ENCODE measurements at regions of chr1 and their contacts with region 1.

Region 1: GRCh38 chr1:38371505-38371844 is 324.9 kb upstream of the POU3F1 start:
- DNase-seq: no peak
- ATAC-seq: no peak
- H3K4me3 ChIP-seq: no peak overlapping the region
- H3K4me3 Mint-ChIP-seq: no peak overlapping the region
- H3K27ac ChIP-seq: no peak overlapping the region
- H3K27ac Mint-ChIP-seq: no peak overlapping the region
- H3K4me1 ChIP-seq: no peaks in the 10 kb centered on the region
- H3K4me1 Mint-ChIP-seq: no peaks in the 10 kb centered on the region
- H3K27me3 ChIP-seq: peaks cover 0 to 7% of the 10 kb centered on the region in 2 experiments
- H3K27me3 Mint-ChIP-seq: peaks cover 13 to 35% of the 10 kb centered on the region in 2 donors

Region 2: GRCh38 chr1:37265786-37266667 is 1105.4 kb before region 1 on chr1:
- CTCF ChIA-PET with region 1: no interaction called
- POLR2A ChIA-PET with region 1: no interaction called
- DNase-seq: no peak
- ATAC-seq: no peak
- H3K4me3 ChIP-seq: no peak overlapping the region
- H3K4me3 Mint-ChIP-seq: no peak overlapping the region
- H3K27ac ChIP-seq: no peak overlapping the region
- H3K27ac Mint-ChIP-seq: no peak overlapping the region
- H3K4me1 ChIP-seq: no peaks in the 10 kb centered on the region
- H3K4me1 Mint-ChIP-seq: no peaks in the 10 kb centered on the region
- H3K27me3 ChIP-seq: peaks cover 0 to 34% of the 10 kb centered on the region in 2 experiments
- H3K27me3 Mint-ChIP-seq: peaks cover 32 to 42% of the 10 kb centered on the region in 2 donors

Region 3: GRCh38 chr1:38431535-38432376 is 60.3 kb after region 1 on chr1:
- CTCF ChIA-PET with region 1: no interaction called
- POLR2A ChIA-PET with region 1: no interaction called
- DNase-seq: no peak
- ATAC-seq: no peak
- H3K4me3 ChIP-seq: no peak overlapping the region
- H3K4me3 Mint-ChIP-seq: no peak overlapping the region
- H3K27ac ChIP-seq: no peak overlapping the region
- H3K27ac Mint-ChIP-seq: no peak overlapping the region
- H3K4me1 ChIP-seq: no peaks in the 10 kb centered on the region
- H3K4me1 Mint-ChIP-seq: no peaks in the 10 kb centered on the region
- H3K27me3 ChIP-seq: peaks cover 0 to 12% of the 10 kb centered on the region in 2 experiments
- H3K27me3 Mint-ChIP-seq: peaks cover 15 to 18% of the 10 kb centered on the region in 2 donors

Region 4: GRCh38 chr1:38662126-38662525 is 290.7 kb after region 1 on chr1:
- CTCF ChIA-PET with region 1: no interaction called
- POLR2A ChIA-PET with region 1: no interaction called
- DNase-seq: no peak
- ATAC-seq: no peak
- H3K4me3 ChIP-seq: no peak overlapping the region
- H3K4me3 Mint-ChIP-seq: no peak overlapping the region
- H3K27ac ChIP-seq: no peak overlapping the region
- H3K27ac Mint-ChIP-seq: no peak overlapping the region
- H3K4me1 ChIP-seq: no peaks in the 10 kb centered on the region
- H3K4me1 Mint-ChIP-seq: no peaks in the 10 kb centered on the region
- H3K27me3 ChIP-seq: peaks cover 2 to 15% of the 10 kb centered on the region in 2 experiments
- H3K27me3 Mint-ChIP-seq: peaks cover 37 to 41% of the 10 kb centered on the region in 2 donors

Region 5: GRCh38 chr1:39799770-39800470 is 1428.4 kb after region 1 on chr1:
- CTCF ChIA-PET with region 1: no interaction called
- POLR2A ChIA-PET with region 1: interaction called in 1 of 2 experiments, 12 read pairs
- DNase-seq: peak; percentile 15 to 72 (median 47)
- ATAC-seq: peak; percentile 67 to 80 (median 69)
- H3K4me3 ChIP-seq: peak overlapping the region in 1 of 2 donors; percentile 41
- H3K4me3 Mint-ChIP-seq: peak overlapping the region; percentile 72 to 79 (median 76)
- H3K27ac ChIP-seq: peak overlapping the region; percentile 96
- H3K27ac Mint-ChIP-seq: peak overlapping the region; percentile 94 to 95
- H3K4me1 ChIP-seq: peaks cover 3 to 15% of the 10 kb centered on the region in 2 experiments
- H3K4me1 Mint-ChIP-seq: peaks cover 9 to 17% (median 11%) of the 10 kb centered on the region in 3 donors
- H3K27me3 ChIP-seq: no peaks in the 10 kb centered on the region
- H3K27me3 Mint-ChIP-seq: no peaks in the 10 kb centered on the region

Measured in T-cell (primary cell).